Esophagus squamous epithelium (tissue), 5 donors: ENCODE measurements at regions of chr13 and their contacts with region 1.

Region 1: DNA sequence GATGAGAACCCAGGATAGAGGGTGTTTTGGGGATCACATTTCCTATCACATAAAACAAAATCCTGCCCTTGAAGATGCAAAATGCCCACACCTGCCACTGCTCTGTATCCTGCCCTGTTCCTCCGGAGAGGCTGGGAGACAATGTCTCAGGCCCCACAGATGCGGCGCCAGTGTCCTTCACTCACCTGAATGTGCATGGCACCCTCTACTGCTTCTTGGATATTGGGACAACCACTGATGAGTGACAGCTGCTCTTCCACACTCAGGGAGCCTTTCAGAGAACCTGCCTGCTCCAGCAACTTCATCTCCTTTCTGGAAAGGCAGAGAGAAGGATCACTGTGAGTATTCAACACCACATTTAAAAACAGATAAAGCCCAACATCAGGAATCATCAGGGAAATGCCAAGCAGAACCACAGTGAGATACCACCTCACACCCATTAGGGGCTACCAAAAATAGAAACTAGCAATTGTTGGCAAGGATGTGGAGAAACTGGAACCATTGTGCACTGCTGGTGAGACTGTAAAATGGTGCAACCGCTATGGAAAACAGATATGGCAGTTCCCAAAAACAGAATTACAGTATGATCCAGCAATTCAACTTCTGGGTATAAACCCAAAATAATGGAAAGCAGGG is 36.4 kb downstream of the CRYL1 start:
- DNase-seq: no peak
- H3K4me3 ChIP-seq: no peak overlapping the region
- H3K27ac ChIP-seq: no peak overlapping the region
- H3K4me1 ChIP-seq: peaks cover 0 to 36% (median 0%) of the 10 kb centered on the region in 3 donors
- H3K27me3 ChIP-seq: no peaks in the 10 kb centered on the region
- CTCF ChIP-seq: peak in 4 of 6 experiments; percentile 37 to 70 (median 46)
- POLR2A ChIP-seq: no peak

Region 2: DNA sequence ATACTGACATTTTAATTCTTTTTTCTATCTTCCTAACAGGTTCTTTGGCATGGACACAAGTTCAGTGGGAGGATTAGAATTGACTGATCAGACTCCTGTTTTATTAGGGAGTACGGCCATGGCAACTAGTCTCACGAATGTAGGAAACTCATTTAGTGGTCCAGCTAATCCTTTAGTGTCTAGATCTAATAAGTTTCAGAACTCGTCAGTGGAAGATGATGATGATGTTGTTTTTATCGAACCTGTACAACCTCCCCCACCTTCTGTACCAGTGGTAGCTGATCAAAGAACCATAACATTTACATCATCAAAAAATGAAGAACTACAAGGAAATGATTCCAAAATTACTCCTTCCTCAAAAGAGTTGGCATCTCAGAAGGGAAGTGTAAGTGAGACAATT is 496.3 kb before region 1 on chr13:
- intact Hi-C with region 1: no loop called
- DNase-seq: no peak
- H3K4me3 ChIP-seq: no peak overlapping the region
- H3K27ac ChIP-seq: no peak overlapping the region
- H3K4me1 ChIP-seq: peaks cover 0 to 22% (median 5%) of the 10 kb centered on the region in 3 donors
- H3K27me3 ChIP-seq: no peaks in the 10 kb centered on the region
- CTCF ChIP-seq: no peak
- POLR2A ChIP-seq: no peak

Region 3: DNA sequence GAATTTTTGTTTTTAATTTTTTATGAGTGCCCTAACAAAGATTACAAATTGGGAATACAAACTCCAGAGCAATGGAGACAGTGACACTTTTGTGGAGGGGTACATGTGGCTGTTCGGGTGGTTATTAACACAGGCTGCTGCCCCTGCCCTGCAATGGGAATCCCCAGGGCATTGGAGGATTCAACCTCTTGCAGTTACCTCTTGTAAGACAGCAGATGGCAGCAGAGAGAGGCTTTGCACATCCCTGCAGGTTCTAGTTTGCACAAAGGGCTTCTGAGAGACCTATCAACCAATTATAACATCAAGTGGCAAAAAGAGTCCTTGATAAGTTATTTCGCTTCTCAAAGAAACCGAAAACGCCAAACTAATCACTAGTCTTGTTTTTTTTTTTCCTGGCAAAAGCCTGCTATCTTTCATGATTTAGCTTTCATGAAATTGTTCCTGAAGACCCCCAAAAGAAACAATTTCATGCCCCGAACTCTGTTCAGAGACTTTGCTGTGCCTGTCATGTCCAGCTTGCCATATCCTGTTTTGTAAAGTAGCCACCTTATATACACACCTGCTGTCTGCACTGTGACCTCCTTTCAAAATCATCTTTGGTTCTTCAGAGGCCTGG is 307.0 kb before region 1 on chr13:
- intact Hi-C with region 1: loop called (anchors 10 kb)
- DNase-seq: no peak
- H3K4me3 ChIP-seq: no peak overlapping the region
- H3K27ac ChIP-seq: no peak overlapping the region
- H3K4me1 ChIP-seq: peaks cover 0 to 26% (median 0%) of the 10 kb centered on the region in 3 donors
- H3K27me3 ChIP-seq: peaks cover 0 to 18% (median 0%) of the 10 kb centered on the region in 4 donors
- CTCF ChIP-seq: peak; percentile 65 to 86 (median 80)
- POLR2A ChIP-seq: no peak

Region 4: GRCh38 chr13:20754009-20754408 is 264.7 kb after region 1 on chr13:
- intact Hi-C with region 1: no loop called
- DNase-seq: no peak
- H3K4me3 ChIP-seq: no peak overlapping the region
- H3K27ac ChIP-seq: no peak overlapping the region
- H3K4me1 ChIP-seq: no peaks in the 10 kb centered on the region
- H3K27me3 ChIP-seq: no peaks in the 10 kb centered on the region
- CTCF ChIP-seq: no peak
- POLR2A ChIP-seq: no peak